IMR-90 (cell line): ENCODE measurements at regions of chr2 and their contacts with region 1.

Region 1: GRCh38 chr2:32792416-32792815 is 154.3 kb upstream of the LTBP1 start:
- DNase-seq: no peak
- ATAC-seq: no peak
- H3K4me3 ChIP-seq: no peak overlapping the region
- H3K27ac ChIP-seq: no peak overlapping the region
- H3K4me1 ChIP-seq: peaks cover 2% of the 10 kb centered on the region; the same call in 1 of the 2 replicates
- H3K27me3 ChIP-seq: no peaks in the 10 kb centered on the region
- CTCF ChIP-seq: no peak
- POLR2A ChIP-seq: no peak
- RAD21 ChIP-seq: no peak

Region 2: DNA sequence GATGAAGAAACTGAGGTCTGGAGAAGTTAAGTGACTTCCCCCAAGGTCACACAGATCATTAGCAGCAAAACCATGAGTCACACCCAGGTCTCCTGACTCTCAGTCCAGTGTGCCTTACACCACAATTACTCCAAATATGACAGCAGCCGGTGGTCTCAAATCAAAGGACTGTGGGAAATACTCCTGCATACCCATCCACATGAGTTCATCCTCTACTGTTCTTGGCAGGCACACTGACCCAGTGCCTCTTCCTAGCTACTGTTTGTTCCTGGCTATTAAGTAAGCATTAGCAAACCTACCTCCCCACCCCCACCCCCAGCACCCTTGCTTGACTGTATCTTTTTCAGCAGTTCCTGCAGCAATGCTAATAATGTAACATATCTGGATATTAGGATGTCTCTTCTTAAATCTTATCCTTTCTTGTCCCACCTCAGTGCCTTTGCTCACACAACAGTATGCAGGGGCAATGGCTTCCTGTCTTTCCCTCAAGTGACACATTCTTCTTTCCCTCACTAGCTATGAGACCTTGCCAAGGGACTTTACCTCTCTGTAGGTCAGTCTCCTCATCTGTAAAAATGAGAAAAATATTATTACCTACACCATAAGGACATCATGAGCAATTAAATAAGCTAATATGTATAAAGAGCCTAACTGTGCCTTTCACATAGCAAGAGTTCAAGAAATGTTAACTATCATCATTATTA is 760.5 kb after region 1 on chr2:
- CTCF ChIA-PET with region 1: no interaction called
- POLR2A ChIA-PET with region 1: no interaction called
- dilution Hi-C with region 1: no loop called
- in situ Hi-C with region 1: loop called (anchors 25 kb)
- intact Hi-C with region 1: no loop called
- DNase-seq: peak; percentile 52
- ATAC-seq: peak; percentile 60
- H3K4me3 ChIP-seq: no peak overlapping the region
- H3K27ac ChIP-seq: no peak overlapping the region
- H3K4me1 ChIP-seq: peaks cover 6% of the 10 kb centered on the region
- H3K27me3 ChIP-seq: no peaks in the 10 kb centered on the region
- CTCF ChIP-seq: no peak
- POLR2A ChIP-seq: no peak
- RAD21 ChIP-seq: no peak